PC-9 (cell line): ENCODE measurements at regions of chr5 and their contacts with region 1.

Region 1: GRCh38 chr5:115968770-115969169 is 6.5 kb downstream of the LVRN start:
- DNase-seq: no peak
- H3K4me3 ChIP-seq: no peak overlapping the region
- H3K27ac ChIP-seq: no peak overlapping the region
- H3K4me1 ChIP-seq: no peaks in the 10 kb centered on the region
- H3K27me3 ChIP-seq: no peaks in the 10 kb centered on the region
- CTCF ChIP-seq: no peak

Region 2: DNA sequence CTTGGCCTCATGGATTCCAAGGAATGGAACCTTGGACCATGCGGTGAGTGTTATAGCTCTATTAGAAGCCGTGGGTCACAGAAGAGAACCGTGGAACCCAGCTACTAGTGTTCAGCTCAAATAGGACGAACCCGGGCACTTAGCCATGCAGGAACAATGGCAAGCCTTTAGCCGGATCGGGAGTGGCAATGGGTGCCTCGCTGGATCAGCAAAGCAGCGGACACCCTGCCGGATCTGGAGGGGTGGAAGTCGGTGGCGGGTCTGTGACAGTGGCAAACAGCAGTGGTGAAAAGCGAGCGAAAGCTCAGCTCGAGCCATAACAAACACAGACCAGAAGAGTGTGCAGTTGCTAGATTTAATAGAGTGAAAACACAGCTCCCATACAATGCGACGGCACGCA is 149.9 kb before region 1 on chr5:
- CTCF ChIA-PET with region 1: no interaction called
- POLR2A ChIA-PET with region 1: interaction called, 21 read pairs
- intact Hi-C with region 1: no loop called
- DNase-seq: no peak
- H3K4me3 ChIP-seq: no peak overlapping the region
- H3K27ac ChIP-seq: no peak overlapping the region
- H3K4me1 ChIP-seq: no peaks in the 10 kb centered on the region
- H3K27me3 ChIP-seq: no peaks in the 10 kb centered on the region
- CTCF ChIP-seq: no peak